HepG2 (cell line): ENCODE measurements at regions of chr16 and their contacts with region 1.

Region 1: DNA sequence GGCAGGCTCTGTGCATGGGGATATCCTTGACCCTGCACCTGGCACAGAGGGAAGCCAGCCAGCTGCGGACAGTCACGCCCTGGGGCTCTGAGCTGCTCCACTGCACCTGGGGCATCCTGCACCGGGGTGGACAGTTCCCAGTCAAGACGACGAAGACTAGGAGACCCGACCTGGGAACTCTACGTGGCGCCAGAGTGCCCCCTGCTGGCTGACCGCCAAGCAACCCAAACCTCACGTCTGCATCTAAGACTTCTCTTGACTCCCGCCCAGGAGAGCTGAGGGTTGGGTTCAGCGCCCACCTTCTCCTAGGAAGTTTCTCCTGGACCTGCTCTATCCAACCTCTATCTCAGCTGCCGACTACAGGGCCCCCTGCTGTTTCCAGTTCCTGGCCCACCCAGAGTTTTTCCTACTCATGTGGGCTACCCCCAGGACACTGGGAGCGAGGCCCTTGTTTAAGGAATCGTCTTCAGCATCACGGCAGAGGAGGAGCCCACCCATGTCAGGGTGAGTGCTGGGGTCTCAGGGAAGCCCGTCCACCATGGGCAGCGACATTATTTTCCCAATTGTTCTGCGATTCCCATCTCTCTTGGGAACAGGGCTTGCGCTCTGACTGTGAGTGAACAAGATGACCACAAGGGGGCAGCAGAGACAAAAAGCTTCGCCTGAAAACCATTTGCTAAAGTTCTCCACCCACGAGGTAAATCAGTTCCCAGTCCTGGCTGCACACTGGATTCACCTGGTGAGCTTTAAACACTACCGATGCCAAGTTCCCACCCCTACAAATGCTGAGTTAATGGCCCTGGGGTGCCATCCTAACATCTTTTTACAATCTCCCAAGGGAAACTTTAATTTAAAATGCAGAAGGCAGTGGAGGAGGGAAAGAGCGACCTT is 29.3 kb downstream of the TLE7 start:
- DNase-seq: peak; percentile 78
- ATAC-seq: peak; percentile 90
- H3K4me3 ChIP-seq: no peak overlapping the region
- H3K27ac ChIP-seq: no peak overlapping the region
- H3K4me1 ChIP-seq: peaks cover 11% of the 10 kb centered on the region; the same call in 1 of the 2 replicates
- H3K27me3 ChIP-seq: peaks cover 2 to 56% of the 10 kb centered on the region in 2 experiments
- CTCF ChIP-seq: peak; percentile 90
- EP300 ChIP-seq: no peak
- POLR2A ChIP-seq: no peak
- RAD21 ChIP-seq: peak; percentile 55; the same call in 1 of the 2 replicates

Region 2: GRCh38 chr16:71258372-71258771 is 154.1 kb before region 1 on chr16:
- CTCF ChIA-PET with region 1: no interaction called
- POLR2A ChIA-PET with region 1: no interaction called
- in situ Hi-C with region 1: no loop called
- intact Hi-C with region 1: no loop called
- DNase-seq: no peak
- ATAC-seq: no peak
- H3K4me3 ChIP-seq: no peak overlapping the region
- H3K27ac ChIP-seq: no peak overlapping the region
- H3K4me1 ChIP-seq: no peaks in the 10 kb centered on the region
- H3K27me3 ChIP-seq: peaks cover 0 to 25% of the 10 kb centered on the region in 2 experiments; a peak in 2 of 5 replicates
- CTCF ChIP-seq: no peak
- EP300 ChIP-seq: no peak
- POLR2A ChIP-seq: no peak
- RAD21 ChIP-seq: no peak

Region 3: DNA sequence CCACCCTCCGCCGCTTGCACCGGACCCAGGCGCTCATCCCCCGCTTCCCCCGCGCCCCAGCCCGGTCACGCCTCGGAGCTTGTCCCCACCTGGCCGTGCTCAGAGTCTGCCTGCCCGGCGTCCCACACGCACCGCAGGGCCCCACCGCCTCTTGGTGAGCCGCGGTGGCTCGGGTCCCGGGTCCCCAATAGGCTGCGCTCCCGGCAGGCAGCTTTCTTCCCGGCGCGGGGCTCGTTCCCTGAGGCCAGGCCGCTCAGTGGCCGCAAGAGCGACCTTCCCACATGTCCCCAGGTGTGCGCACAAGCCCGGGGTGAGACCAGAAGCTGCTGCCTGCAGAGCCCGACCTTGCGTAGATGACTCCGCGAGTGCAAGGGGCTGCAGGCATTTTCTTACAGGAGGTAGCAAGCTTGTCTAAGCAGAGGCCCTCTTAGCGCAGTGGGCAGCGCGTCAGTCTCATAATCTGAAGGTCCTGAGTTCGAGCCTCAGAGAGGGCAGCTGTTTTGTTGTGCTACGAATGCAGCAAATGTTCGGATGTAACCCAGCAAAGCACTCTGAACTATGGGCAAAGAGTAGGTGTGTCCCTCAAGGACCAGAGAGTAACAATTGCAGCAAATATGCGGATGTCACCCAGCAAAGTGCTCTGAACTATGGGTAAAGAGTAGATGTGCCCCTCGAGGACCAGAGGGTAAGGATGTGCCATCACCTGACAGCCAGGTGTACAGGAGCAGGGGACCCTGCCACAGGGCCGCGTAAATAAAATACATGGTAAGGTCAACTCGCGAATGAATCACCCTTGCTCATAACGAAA is 13.8 kb after region 1 on chr16:
- CTCF ChIA-PET with region 1: interaction called, 23 read pairs
- POLR2A ChIA-PET with region 1: interaction called, 5 read pairs
- in situ Hi-C with region 1: no loop called
- intact Hi-C with region 1: loop called (anchors 1 kb)
- DNase-seq: peak; percentile 99
- ATAC-seq: peak; percentile 93
- H3K4me3 ChIP-seq: peak overlapping the region; percentile 57 to 80 (median 59)
- H3K27ac ChIP-seq: peak overlapping the region; percentile 41
- H3K4me1 ChIP-seq: peaks cover 30% of the 10 kb centered on the region
- H3K27me3 ChIP-seq: peaks cover 4 to 32% of the 10 kb centered on the region in 2 experiments
- CTCF ChIP-seq: peak; percentile 44
- EP300 ChIP-seq: peak; percentile 9 to 43; a peak in 1 of 4 replicates
- POLR2A ChIP-seq: no peak
- RAD21 ChIP-seq: no peak; the same call in 1 of the 2 replicates

Region 4: GRCh38 chr16:71441348-71441781 is 28.9 kb after region 1 on chr16:
- CTCF ChIA-PET with region 1: interaction called, 53 read pairs
- POLR2A ChIA-PET with region 1: no interaction called
- in situ Hi-C with region 1: no loop called
- intact Hi-C with region 1: loop called (anchors 1 kb)
- DNase-seq: no peak
- ATAC-seq: peak; percentile 76
- H3K4me3 ChIP-seq: no peak overlapping the region
- H3K27ac ChIP-seq: no peak overlapping the region
- H3K4me1 ChIP-seq: peaks cover 8% of the 10 kb centered on the region
- H3K27me3 ChIP-seq: peaks cover 4 to 21% of the 10 kb centered on the region in 2 experiments
- CTCF ChIP-seq: peak; percentile 87
- EP300 ChIP-seq: no peak
- POLR2A ChIP-seq: no peak
- RAD21 ChIP-seq: peak; percentile 85

Region 5: GRCh38 chr16:71499775-71500364 is 87.4 kb after region 1 on chr16:
- CTCF ChIA-PET with region 1: interaction called, 31 read pairs
- POLR2A ChIA-PET with region 1: no interaction called
- in situ Hi-C with region 1: loop called (anchors 5 kb)
- intact Hi-C with region 1: loop called (anchors 1 kb)
- DNase-seq: peak; percentile 68
- ATAC-seq: peak; percentile 85
- H3K4me3 ChIP-seq: no peak overlapping the region
- H3K27ac ChIP-seq: no peak overlapping the region
- H3K4me1 ChIP-seq: no peaks in the 10 kb centered on the region
- H3K27me3 ChIP-seq: no peaks in the 10 kb centered on the region
- CTCF ChIP-seq: peak; percentile 90
- EP300 ChIP-seq: no peak
- POLR2A ChIP-seq: no peak
- RAD21 ChIP-seq: peak; percentile 84

Region 6: GRCh38 chr16:71537643-71538042 is 125.1 kb after region 1 on chr16:
- CTCF ChIA-PET with region 1: interaction called, 5 read pairs
- POLR2A ChIA-PET with region 1: no interaction called
- in situ Hi-C with region 1: no loop called
- intact Hi-C with region 1: loop called (anchors 2 kb)
- DNase-seq: peak; percentile 66
- ATAC-seq: peak; percentile 93
- H3K4me3 ChIP-seq: no peak overlapping the region
- H3K27ac ChIP-seq: no peak overlapping the region
- H3K4me1 ChIP-seq: no peaks in the 10 kb centered on the region
- H3K27me3 ChIP-seq: peaks cover 0 to 19% of the 10 kb centered on the region in 2 experiments; a peak in 3 of 5 replicates
- CTCF ChIP-seq: peak; percentile 92
- EP300 ChIP-seq: no peak
- POLR2A ChIP-seq: no peak
- RAD21 ChIP-seq: peak; percentile 77

Region 7: GRCh38 chr16:71552698-71553451 is 140.4 kb after region 1 on chr16:
- CTCF ChIA-PET with region 1: interaction called, 5 read pairs
- POLR2A ChIA-PET with region 1: no interaction called
- in situ Hi-C with region 1: no loop called
- intact Hi-C with region 1: loop called (anchors 5 kb)
- DNase-seq: peak; percentile 64
- ATAC-seq: peak; percentile 93
- H3K4me3 ChIP-seq: peak overlapping the region in 1 of 3 experiments; percentile 13; a peak in 1 of 6 replicates
- H3K27ac ChIP-seq: no peak overlapping the region
- H3K4me1 ChIP-seq: peaks cover 29% of the 10 kb centered on the region
- H3K27me3 ChIP-seq: no peaks in the 10 kb centered on the region
- CTCF ChIP-seq: peak; percentile 84
- EP300 ChIP-seq: no peak
- POLR2A ChIP-seq: no peak
- RAD21 ChIP-seq: peak; percentile 55; the same call in 1 of the 2 replicates